Prostate gland (tissue), 2 donors: ENCODE measurements at regions of chr12 and their contacts with region 1.

Region 1: DNA sequence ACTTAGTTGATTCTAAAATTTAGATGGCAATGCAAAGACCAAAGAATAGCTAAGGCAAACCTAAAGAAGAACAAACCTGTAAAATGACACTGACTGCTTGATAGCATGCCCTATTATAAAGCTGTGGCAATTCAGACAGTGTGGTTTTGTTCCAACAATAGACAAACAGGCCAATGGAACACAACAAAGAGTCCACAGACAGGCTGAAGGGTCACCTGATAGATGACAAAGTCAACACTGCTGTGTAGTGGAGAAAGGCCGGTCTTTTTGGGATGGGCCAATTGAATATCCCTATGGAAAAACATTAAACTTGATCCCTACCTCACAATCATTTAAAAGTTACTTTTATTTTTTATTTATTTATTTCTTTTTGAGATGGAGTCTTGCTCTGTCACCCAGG is 33.8 kb upstream of the SLC25A3 start:
- DNase-seq: no peak
- H3K4me3 ChIP-seq: no peak overlapping the region
- H3K27ac ChIP-seq: no peak overlapping the region
- H3K4me1 ChIP-seq: no peaks in the 10 kb centered on the region
- H3K27me3 ChIP-seq: no peaks in the 10 kb centered on the region
- CTCF ChIP-seq: no peak
- POLR2A ChIP-seq: no peak

Region 2: GRCh38 chr12:98714426-98714825 is 154.8 kb after region 1 on chr12:
- intact Hi-C with region 1: no loop called
- DNase-seq: no peak
- H3K4me3 ChIP-seq: no peak overlapping the region
- H3K27ac ChIP-seq: no peak overlapping the region
- H3K4me1 ChIP-seq: no peaks in the 10 kb centered on the region
- H3K27me3 ChIP-seq: no peaks in the 10 kb centered on the region
- CTCF ChIP-seq: no peak
- POLR2A ChIP-seq: no peak

Region 3: DNA sequence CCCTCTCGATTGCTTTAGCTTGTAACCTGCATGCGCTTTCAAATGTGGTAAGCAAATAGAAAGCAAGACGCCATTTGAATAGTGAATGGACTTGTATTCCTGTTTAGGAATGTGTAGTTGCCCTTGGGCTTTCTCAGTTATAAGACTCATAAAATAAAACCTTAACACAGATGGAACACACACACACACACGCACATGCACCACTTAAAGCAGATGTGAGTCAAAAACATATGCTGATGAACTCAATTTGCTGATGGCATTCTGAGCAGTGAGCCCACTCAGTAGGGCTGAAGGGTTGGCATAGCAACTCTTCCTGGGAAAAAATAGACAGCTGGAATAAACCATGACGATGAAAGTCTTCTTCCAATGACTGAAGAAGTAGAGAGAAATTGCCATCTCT is 445.9 kb after region 1 on chr12:
- intact Hi-C with region 1: loop called (anchors 10 kb)
- DNase-seq: no peak
- H3K4me3 ChIP-seq: no peak overlapping the region
- H3K27ac ChIP-seq: no peak overlapping the region
- H3K4me1 ChIP-seq: no peaks in the 10 kb centered on the region
- H3K27me3 ChIP-seq: no peaks in the 10 kb centered on the region
- CTCF ChIP-seq: no peak
- POLR2A ChIP-seq: no peak